ENCODE measurements at regions of chr5 and their contacts with region 1.

Region 1: DNA sequence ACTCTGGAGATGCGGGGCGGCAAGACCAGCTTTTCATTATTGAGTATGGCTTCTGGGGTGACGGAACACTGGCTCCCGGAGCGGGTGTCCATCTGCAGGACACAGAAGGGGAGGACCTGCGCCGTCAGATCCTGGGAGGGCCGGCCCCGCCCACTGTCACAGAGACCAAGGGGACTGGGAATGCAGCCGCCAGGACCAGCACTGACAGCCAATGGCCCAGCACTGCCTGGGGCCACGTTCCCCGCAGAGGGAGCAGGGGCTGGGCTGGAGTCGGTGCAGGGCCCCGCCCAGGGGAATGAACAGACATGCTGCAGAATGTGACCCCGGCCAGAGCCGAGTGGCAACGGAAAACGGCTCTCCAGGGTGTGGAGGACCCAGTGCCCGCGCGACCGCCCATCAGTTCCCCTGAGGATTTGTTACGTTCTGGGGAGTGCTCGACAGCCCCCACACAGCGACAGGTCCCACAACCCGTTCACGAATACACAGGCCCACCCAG is at the start of gene ZDHHC11:
- DNase-seq: no peak
- H3K4me3 ChIP-seq: no peak within 1 kb of the TSS
- H3K4me3 Mint-ChIP-seq: no peak within 1 kb of the TSS
- H3K27ac ChIP-seq: no peak within 1 kb of the TSS
- H3K27ac Mint-ChIP-seq: no peak within 1 kb of the TSS
- H3K4me1 ChIP-seq: no peaks in the 10 kb centered on the region
- H3K4me1 Mint-ChIP-seq: peaks cover 7 to 12% (median 7%) of the 10 kb centered on the region in 4 donors
- H3K27me3 ChIP-seq: no peaks in the 10 kb centered on the region
- H3K27me3 Mint-ChIP-seq: peaks cover 0 to 6% of the 10 kb centered on the region in 2 donors
- total RNA-seq, gene ZDHHC11: 15.1 to 15.3 TPM

Region 2: GRCh38 chr5:759111-759751 is 91.3 kb before region 1 on chr5:
- CTCF ChIA-PET with region 1: no interaction called
- POLR2A ChIA-PET with region 1: no interaction called
- intact Hi-C with region 1: loop called (anchors 2 kb)
- DNase-seq: peak; percentile 78 to 92 (median 88)
- H3K4me3 ChIP-seq: peak overlapping the region in 1 of 2 donors; percentile 34
- H3K4me3 Mint-ChIP-seq: peak overlapping the region; percentile 82 to 88 (median 86)
- H3K27ac ChIP-seq: peak overlapping the region; percentile 65
- H3K27ac Mint-ChIP-seq: peak overlapping the region; percentile 93 to 100 (median 97)
- H3K4me1 ChIP-seq: peaks cover 27% of the 10 kb centered on the region
- H3K4me1 Mint-ChIP-seq: peaks cover 13 to 38% (median 25%) of the 10 kb centered on the region in 4 donors
- H3K27me3 ChIP-seq: no peaks in the 10 kb centered on the region
- H3K27me3 Mint-ChIP-seq: no peaks in the 10 kb centered on the region